ENCODE measurements at regions of chr16 and their contacts with region 1.

Region 1: DNA sequence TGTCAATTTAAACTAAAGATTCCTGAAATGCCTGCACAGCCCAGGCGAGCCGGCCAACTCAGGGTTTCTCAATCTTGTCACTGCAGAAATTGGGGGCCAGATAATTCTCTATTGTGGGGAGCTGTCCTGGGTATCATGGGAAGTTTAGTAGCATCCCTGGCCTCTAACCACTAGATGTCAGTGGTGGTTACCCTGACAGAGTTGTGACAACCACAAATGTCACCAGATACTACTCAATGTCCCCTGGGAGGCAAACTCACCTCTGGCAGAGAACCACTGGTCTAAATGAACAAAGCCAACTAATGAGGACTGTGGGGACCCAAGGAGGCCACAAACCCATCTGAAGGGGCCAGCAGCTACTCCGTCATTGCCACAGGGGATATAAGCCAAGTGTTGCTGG is 90.9 kb downstream of the MYH11 start:
- DNase-seq: peak; percentile 27
- H3K4me3 ChIP-seq: no peak overlapping the region
- H3K27ac ChIP-seq: no peak overlapping the region
- H3K4me1 ChIP-seq: no peaks in the 10 kb centered on the region
- H3K27me3 ChIP-seq: no peaks in the 10 kb centered on the region
- CTCF ChIP-seq: peak; percentile 58

Region 2: GRCh38 chr16:15822957-15823356 is 57.1 kb after region 1 on chr16:
- intact Hi-C with region 1: loop called (anchors 5 kb)
- DNase-seq: no peak
- H3K4me3 ChIP-seq: no peak overlapping the region
- H3K27ac ChIP-seq: no peak overlapping the region
- H3K4me1 ChIP-seq: no peaks in the 10 kb centered on the region
- H3K27me3 ChIP-seq: no peaks in the 10 kb centered on the region
- CTCF ChIP-seq: no peak

Region 3: DNA sequence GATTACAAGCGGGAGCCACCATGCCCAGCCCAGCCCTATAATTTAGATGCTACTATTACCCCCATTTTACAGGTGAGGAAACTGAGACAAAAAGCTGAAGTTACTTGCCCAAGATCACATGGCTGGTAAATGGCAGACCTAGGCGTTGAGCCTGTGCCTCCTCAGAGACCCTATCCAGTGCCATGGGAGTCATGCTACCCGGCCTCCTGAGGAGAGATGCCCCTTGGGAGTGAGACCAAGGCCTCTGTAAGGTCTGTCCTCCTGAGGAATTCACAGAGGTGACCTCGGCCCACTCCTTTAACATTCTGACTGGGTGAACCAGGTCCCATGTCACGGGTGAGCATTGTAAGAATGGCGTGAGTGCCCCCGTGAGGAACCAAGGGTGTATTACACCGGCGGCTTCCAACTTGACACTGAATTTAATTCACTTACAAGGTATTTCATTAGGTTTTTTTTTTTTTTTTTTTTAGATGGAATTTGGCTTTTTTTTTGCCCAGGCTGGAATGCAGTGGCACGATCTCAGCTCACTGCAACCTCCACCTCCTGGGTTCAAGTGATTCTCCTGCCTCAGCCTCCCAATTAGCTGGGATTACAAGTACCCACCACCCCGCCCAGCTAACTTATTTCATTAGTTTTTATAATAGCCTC is 361.7 kb after region 1 on chr16:
- intact Hi-C with region 1: loop called (anchors 10 kb)
- DNase-seq: peak; percentile 66
- H3K4me3 ChIP-seq: no peak overlapping the region
- H3K27ac ChIP-seq: no peak overlapping the region
- H3K4me1 ChIP-seq: no peaks in the 10 kb centered on the region
- H3K27me3 ChIP-seq: no peaks in the 10 kb centered on the region
- CTCF ChIP-seq: peak; percentile 85